ENCODE measurements at regions of chr17 and their contacts with region 1.

Region 1: GRCh38 chr17:76547184-76547641 is 7.4 kb downstream of the PRCD start:
- DNase-seq: peak; percentile 81
- H3K4me3 Mint-ChIP-seq: no peak overlapping the region
- H3K27ac Mint-ChIP-seq: no peak overlapping the region
- H3K4me1 Mint-ChIP-seq: peaks cover 10% of the 10 kb centered on the region
- H3K27me3 Mint-ChIP-seq: peaks cover 12% of the 10 kb centered on the region
- CTCF ChIP-seq: peak; percentile 51

Region 2: DNA sequence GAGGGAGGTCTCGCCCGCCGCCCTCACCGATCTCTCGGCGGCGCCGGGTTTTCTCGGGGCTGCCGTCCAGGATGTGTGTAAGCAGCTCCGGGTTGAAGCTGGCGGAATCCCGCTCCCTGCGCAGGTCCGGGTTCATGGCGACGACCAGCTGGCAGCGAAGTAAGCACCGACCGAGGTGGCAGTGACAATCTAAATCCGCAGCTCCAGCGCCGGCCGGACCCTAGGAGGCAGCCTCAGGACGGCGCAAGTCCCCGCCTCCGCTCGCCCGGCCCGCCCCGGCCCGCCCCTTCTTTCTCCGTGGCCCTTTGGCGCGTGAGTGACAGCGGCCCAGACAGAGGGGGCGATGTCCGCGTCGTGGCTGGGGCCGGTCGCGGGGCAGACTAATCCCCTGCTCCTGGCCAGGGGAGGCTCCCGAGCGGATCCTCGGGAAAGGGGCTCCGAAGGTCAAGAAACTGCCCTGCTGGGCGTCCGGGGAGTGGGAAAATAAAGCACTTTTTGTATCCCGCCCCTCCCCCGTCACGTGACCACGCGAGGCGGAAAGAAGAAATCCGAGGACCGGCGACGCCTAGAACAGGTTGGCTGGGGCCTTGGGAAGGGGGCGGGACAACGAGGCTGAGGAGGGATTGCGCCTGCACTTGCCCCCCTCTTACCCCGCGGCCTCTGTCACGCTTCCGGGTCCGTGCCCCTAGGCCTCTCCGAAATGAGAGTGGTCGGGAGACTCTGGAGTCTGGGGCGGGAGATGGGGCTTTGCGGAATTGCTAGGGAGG is 568.1 kb before region 1 on chr17 and contains the starts of genes ACOX1 and TEN1:
- CTCF ChIA-PET with region 1: no interaction called
- POLR2A ChIA-PET with region 1: no interaction called
- intact Hi-C with region 1: loop called (anchors 5 kb)
- DNase-seq: peak; percentile 98
- H3K4me3 Mint-ChIP-seq: peak within 1 kb of the TSS; percentile 100
- H3K27ac Mint-ChIP-seq: peak within 1 kb of the TSS; percentile 100
- H3K4me1 Mint-ChIP-seq: peaks cover 19% of the 10 kb centered on the region
- H3K27me3 Mint-ChIP-seq: no peaks in the 10 kb centered on the region
- CTCF ChIP-seq: no peak
- total RNA-seq, gene ACOX1: 23.4 and 26.0 TPM in 2 replicates
- total RNA-seq, gene TEN1: 13.0 and 15.4 TPM in 2 replicates

Region 3: GRCh38 chr17:76529224-76530094 is 17.8 kb before region 1 on chr17:
- CTCF ChIA-PET with region 1: interaction called, 41 read pairs
- POLR2A ChIA-PET with region 1: interaction called, 29 read pairs
- intact Hi-C with region 1: no loop called
- DNase-seq: peak; percentile 85
- H3K4me3 Mint-ChIP-seq: no peak overlapping the region
- H3K27ac Mint-ChIP-seq: peak overlapping the region; percentile 9
- H3K4me1 Mint-ChIP-seq: peaks cover 26% of the 10 kb centered on the region
- H3K27me3 Mint-ChIP-seq: no peaks in the 10 kb centered on the region
- CTCF ChIP-seq: no peak

Region 4: GRCh38 chr17:76567634-76568432 is 20.6 kb after region 1 on chr17:
- CTCF ChIA-PET with region 1: interaction called, 3 read pairs
- POLR2A ChIA-PET with region 1: interaction called, 47 read pairs
- intact Hi-C with region 1: no loop called
- DNase-seq: peak; percentile 35
- H3K4me3 Mint-ChIP-seq: no peak overlapping the region
- H3K27ac Mint-ChIP-seq: peak overlapping the region; percentile 50
- H3K4me1 Mint-ChIP-seq: peaks cover 27% of the 10 kb centered on the region
- H3K27me3 Mint-ChIP-seq: no peaks in the 10 kb centered on the region
- CTCF ChIP-seq: no peak

Region 5: GRCh38 chr17:76585818-76586593 is 38.8 kb after region 1 on chr17 and contains the start of gene ST6GALNAC2:
- CTCF ChIA-PET with region 1: interaction called, 4 read pairs
- POLR2A ChIA-PET with region 1: interaction called, 15 read pairs
- intact Hi-C with region 1: no loop called
- DNase-seq: peak; percentile 72
- H3K4me3 Mint-ChIP-seq: peak within 1 kb of the TSS; percentile 74
- H3K27ac Mint-ChIP-seq: no peak within 1 kb of the TSS
- H3K4me1 Mint-ChIP-seq: peaks cover 11% of the 10 kb centered on the region
- H3K27me3 Mint-ChIP-seq: no peaks in the 10 kb centered on the region
- CTCF ChIP-seq: peak; percentile 58
- total RNA-seq, gene ST6GALNAC2: 5.0 and 7.7 TPM in 2 replicates

Region 6: DNA sequence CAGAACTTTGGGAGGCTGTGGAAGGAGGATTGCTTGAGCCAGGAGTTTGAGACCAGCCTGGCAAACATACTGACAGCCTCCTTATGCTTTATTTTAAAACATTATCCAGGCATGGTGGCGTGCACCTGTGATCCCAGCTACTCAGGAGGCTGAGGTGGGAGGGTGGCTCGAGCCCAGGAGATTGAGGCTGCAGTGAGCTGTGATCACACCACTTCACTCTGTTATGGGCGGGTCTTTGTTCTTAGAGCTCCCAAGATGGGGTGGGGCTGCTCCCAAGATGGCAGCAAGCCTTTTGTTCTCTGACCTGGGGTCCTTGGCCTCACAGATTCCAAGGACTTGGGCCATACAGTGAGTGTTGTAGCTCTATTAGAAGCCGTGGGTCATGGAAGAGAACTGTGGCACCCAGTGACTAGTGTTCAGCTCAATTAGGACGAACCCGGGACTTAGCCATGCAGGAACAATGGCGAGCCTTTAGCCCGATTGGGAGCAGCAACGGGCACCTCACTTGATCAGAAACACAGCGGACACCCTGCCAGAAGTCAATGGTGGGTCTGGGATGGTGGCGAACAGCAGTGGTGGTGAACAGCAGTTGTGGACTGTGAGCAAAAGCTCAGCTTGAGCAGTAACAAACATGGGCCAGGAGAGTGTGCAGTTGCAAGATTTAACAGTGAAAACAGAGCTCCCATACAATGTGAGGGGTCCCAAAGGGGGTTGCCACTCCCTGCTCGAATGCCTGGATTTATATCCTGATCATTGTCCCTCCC is 64.7 kb after region 1 on chr17:
- CTCF ChIA-PET with region 1: no interaction called
- POLR2A ChIA-PET with region 1: no interaction called
- intact Hi-C with region 1: no loop called
- DNase-seq: no peak
- H3K4me3 Mint-ChIP-seq: no peak overlapping the region
- H3K27ac Mint-ChIP-seq: no peak overlapping the region
- H3K4me1 Mint-ChIP-seq: peaks cover 11% of the 10 kb centered on the region
- H3K27me3 Mint-ChIP-seq: no peaks in the 10 kb centered on the region
- CTCF ChIP-seq: no peak

Measured in MCF 10A (cell line).